CD8-positive, alpha-beta memory T cell (primary cell): ENCODE measurements at regions of chr19 and their contacts with region 1.

Region 1: DNA sequence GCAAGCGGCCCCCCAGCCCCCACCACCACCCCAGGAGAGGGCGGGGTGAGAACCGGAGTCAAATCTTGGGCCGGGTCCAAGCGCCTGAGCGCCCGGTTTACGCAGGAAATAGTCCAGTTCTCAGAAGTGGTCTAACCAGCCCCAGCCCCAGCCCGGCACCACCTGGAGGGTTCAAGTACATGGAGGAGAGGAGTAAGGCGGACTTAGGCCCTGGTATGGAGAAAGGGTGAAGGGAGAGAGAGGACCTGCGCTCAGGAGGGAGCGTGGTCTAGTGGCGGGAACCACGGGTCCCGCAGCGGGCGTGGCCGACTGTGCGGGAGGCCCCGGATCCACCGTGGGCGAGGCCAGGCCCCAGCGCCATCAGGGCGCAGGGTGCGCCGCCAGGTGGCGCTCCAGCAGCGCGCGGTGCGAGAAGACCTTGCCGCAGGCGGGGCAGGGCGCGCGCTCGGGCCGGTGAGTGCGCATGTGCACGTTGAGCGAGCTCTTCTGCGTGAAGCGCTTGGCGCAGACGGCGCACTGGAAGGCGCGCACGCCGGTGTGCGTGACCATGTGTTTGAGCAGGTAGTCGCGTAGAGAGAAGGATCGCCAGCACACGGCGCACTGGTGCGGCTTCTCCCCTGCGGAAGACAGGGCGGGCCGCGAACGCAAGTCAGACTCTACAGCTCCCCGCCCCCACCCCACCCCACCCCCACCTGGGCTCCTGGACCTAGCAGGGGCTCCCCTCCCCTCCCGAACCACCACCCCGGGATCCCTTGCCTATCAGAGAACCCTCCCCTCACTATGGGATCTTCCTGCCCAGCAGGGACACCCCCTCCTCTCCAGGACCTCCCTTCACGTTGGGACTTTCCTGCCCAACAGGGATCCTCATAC is 2.1 kb upstream of the SLC27A5 start:
- DNase-seq: peak; percentile 91 to 95 (median 94)
- H3K4me3 ChIP-seq: peak overlapping the region; percentile 53
- H3K4me3 Mint-ChIP-seq: peak overlapping the region; percentile 76 to 92 (median 83)
- H3K27ac ChIP-seq: peak overlapping the region; percentile 33
- H3K27ac Mint-ChIP-seq: peak overlapping the region; percentile 43 to 96 (median 85)
- H3K4me1 ChIP-seq: peaks cover 22% of the 10 kb centered on the region
- H3K4me1 Mint-ChIP-seq: peaks cover 25 to 43% (median 27%) of the 10 kb centered on the region in 3 donors
- H3K27me3 ChIP-seq: no peaks in the 10 kb centered on the region
- H3K27me3 Mint-ChIP-seq: peaks cover 0 to 1% of the 10 kb centered on the region in 2 donors

Region 2: DNA sequence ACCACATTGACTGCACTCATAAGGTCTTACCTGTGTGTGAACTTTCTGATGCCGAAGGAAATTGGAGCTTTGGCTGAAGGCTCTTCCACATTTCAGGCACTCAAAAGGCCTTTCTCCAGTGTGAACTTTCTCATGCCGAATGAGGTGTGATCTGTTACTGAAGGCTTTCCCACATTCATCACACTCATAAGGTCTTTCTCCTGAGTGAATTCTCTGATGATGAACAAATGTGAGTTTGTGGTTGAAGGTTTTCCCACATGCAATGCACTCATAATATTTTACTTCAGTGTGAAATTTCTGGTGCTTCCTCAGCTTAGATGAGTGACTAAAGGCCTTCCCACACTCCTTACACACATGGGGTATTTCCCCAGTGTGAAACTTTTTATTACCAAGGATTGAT is 79.7 kb before region 1 on chr19:
- CTCF ChIA-PET with region 1: no interaction called
- POLR2A ChIA-PET with region 1: no interaction called
- DNase-seq: no peak
- H3K4me3 ChIP-seq: no peak overlapping the region
- H3K4me3 Mint-ChIP-seq: no peak overlapping the region
- H3K27ac ChIP-seq: no peak overlapping the region
- H3K27ac Mint-ChIP-seq: no peak overlapping the region
- H3K4me1 ChIP-seq: peaks cover 4% of the 10 kb centered on the region
- H3K4me1 Mint-ChIP-seq: peaks cover 8 to 16% (median 12%) of the 10 kb centered on the region in 3 donors
- H3K27me3 ChIP-seq: no peaks in the 10 kb centered on the region
- H3K27me3 Mint-ChIP-seq: no peaks in the 10 kb centered on the region

Region 3: DNA sequence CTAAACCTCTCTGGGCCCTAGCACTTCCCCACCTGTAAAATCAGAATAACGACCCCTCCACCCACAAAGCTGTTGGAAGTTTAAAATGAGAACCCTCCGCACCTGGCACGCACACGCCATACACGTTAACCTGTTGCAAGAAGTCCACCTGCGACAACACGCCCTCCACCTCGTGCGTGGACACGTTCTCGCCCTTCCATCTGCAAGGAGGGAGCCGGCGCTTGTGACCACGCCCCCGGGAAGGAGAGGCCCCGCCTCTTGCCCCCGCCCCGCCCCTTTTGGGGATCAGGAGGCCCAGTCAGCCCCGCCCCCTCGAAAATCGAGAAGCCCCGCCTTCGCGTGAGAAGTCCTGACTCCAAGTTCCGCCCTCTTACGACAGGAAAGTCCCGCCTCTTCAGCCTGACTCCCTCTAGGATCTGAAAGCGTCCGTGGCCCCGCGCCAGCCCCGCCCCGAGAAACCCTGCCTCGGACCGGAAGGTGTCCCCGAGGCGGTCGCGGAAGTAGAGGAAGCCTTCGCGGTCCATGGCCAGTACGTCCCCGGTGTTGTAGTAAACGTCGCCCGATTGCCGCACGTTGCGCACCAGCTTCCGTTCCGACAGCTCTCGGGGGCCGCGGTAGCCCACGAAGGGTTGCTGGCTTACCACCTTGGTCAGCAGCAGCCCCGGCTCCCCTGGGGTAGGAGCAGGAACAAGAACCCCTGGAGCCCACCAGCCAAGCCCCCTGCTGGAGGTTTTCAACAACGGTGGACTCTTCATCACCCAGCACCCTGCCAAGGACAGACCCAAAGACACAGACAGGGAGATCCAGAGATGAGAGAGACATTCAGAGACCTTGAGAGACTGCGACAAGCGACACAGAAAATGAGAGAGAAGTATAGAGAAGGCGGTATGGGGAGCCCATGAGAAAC is 14.7 kb before region 1 on chr19:
- CTCF ChIA-PET with region 1: interaction called, 18 read pairs
- POLR2A ChIA-PET with region 1: no interaction called
- DNase-seq: peak; percentile 87 to 96 (median 91)
- H3K4me3 ChIP-seq: peak overlapping the region; percentile 83
- H3K4me3 Mint-ChIP-seq: peak overlapping the region; percentile 86 to 96 (median 90)
- H3K27ac ChIP-seq: peak overlapping the region; percentile 60
- H3K27ac Mint-ChIP-seq: peak overlapping the region; percentile 91 to 98 (median 97)
- H3K4me1 ChIP-seq: peaks cover 18% of the 10 kb centered on the region
- H3K4me1 Mint-ChIP-seq: peaks cover 25 to 32% (median 26%) of the 10 kb centered on the region in 3 donors
- H3K27me3 ChIP-seq: no peaks in the 10 kb centered on the region
- H3K27me3 Mint-ChIP-seq: peaks cover 0 to 4% of the 10 kb centered on the region in 2 donors

Region 4: GRCh38 chr19:58543826-58544590 is 30.1 kb after region 1 on chr19 and contains the start of gene TRIM28:
- CTCF ChIA-PET with region 1: interaction called, 29 read pairs
- POLR2A ChIA-PET with region 1: no interaction called
- DNase-seq: peak; percentile 100
- H3K4me3 ChIP-seq: peak within 1 kb of the TSS; percentile 71
- H3K4me3 Mint-ChIP-seq: peak within 1 kb of the TSS; percentile 89 to 96 (median 94)
- H3K27ac ChIP-seq: peak within 1 kb of the TSS; percentile 84
- H3K27ac Mint-ChIP-seq: peak within 1 kb of the TSS; percentile 98 to 100 (median 99)
- H3K4me1 ChIP-seq: peaks cover 24% of the 10 kb centered on the region
- H3K4me1 Mint-ChIP-seq: peaks cover 31 to 42% (median 36%) of the 10 kb centered on the region in 3 donors
- H3K27me3 ChIP-seq: no peaks in the 10 kb centered on the region
- H3K27me3 Mint-ChIP-seq: peaks cover 14 to 17% of the 10 kb centered on the region in 2 donors
- total RNA-seq, gene TRIM28: 705 to 715 TPM

Region 5: DNA sequence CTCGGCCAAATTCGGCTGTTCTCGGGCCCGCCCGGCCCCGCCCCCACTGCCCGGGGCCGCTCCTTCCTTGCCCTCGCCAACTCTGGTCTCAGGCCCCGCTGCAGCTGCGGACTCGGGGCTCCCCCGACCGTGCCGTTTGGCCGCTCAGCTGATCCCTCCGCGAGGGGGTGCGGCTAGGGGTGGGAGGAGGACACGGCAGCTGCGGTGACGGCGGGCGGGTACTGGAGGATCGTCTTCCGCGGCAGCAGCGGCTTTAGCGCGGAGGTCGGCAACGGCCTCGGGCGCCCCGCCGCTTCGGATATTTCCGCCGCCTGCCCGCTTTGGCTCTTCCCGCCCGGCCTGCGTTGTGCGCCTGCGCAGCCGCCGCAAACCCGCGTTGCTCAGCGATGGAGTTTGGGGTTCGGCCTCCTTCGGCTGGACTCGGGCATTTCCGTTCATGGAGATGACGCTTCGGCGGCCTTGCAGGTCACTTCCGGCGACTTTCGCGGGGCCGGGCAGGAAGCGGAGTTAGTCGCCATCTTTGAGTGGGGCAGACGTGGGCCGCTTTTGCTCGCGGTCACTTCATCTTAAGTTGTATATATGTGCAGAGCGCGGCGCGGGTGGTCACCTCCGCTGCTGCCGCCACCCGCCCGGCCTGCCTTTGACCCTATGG is 44.8 kb after region 1 on chr19:
- CTCF ChIA-PET with region 1: interaction called, 45 read pairs
- POLR2A ChIA-PET with region 1: interaction called, 16 read pairs
- DNase-seq: peak; percentile 100
- H3K4me3 ChIP-seq: peak overlapping the region; percentile 100
- H3K4me3 Mint-ChIP-seq: peak overlapping the region; percentile 93 to 100 (median 97)
- H3K27ac ChIP-seq: peak overlapping the region; percentile 99
- H3K27ac Mint-ChIP-seq: peak overlapping the region; percentile 96 to 100 (median 98)
- H3K4me1 ChIP-seq: peaks cover 62% of the 10 kb centered on the region
- H3K4me1 Mint-ChIP-seq: peaks cover 65 to 87% (median 68%) of the 10 kb centered on the region in 3 donors
- H3K27me3 ChIP-seq: no peaks in the 10 kb centered on the region
- H3K27me3 Mint-ChIP-seq: no peaks in the 10 kb centered on the region

Region 6: GRCh38 chr19:58572818-58573657 is 59.1 kb after region 1 on chr19 and contains the start of gene MZF1:
- CTCF ChIA-PET with region 1: interaction called, 28 read pairs
- POLR2A ChIA-PET with region 1: interaction called, 6 read pairs
- DNase-seq: peak; percentile 99 to 100 (median 100)
- H3K4me3 ChIP-seq: peak within 1 kb of the TSS; percentile 98
- H3K4me3 Mint-ChIP-seq: peak within 1 kb of the TSS; percentile 89 to 99 (median 95)
- H3K27ac ChIP-seq: peak within 1 kb of the TSS; percentile 100
- H3K27ac Mint-ChIP-seq: peak within 1 kb of the TSS; percentile 95 to 100 (median 100)
- H3K4me1 ChIP-seq: peaks cover 29% of the 10 kb centered on the region
- H3K4me1 Mint-ChIP-seq: peaks cover 24 to 49% (median 26%) of the 10 kb centered on the region in 3 donors
- H3K27me3 ChIP-seq: no peaks in the 10 kb centered on the region
- H3K27me3 Mint-ChIP-seq: peaks cover 0 to 9% of the 10 kb centered on the region in 2 donors
- total RNA-seq, gene MZF1: 14.0 to 14.8 TPM

Region 7: DNA sequence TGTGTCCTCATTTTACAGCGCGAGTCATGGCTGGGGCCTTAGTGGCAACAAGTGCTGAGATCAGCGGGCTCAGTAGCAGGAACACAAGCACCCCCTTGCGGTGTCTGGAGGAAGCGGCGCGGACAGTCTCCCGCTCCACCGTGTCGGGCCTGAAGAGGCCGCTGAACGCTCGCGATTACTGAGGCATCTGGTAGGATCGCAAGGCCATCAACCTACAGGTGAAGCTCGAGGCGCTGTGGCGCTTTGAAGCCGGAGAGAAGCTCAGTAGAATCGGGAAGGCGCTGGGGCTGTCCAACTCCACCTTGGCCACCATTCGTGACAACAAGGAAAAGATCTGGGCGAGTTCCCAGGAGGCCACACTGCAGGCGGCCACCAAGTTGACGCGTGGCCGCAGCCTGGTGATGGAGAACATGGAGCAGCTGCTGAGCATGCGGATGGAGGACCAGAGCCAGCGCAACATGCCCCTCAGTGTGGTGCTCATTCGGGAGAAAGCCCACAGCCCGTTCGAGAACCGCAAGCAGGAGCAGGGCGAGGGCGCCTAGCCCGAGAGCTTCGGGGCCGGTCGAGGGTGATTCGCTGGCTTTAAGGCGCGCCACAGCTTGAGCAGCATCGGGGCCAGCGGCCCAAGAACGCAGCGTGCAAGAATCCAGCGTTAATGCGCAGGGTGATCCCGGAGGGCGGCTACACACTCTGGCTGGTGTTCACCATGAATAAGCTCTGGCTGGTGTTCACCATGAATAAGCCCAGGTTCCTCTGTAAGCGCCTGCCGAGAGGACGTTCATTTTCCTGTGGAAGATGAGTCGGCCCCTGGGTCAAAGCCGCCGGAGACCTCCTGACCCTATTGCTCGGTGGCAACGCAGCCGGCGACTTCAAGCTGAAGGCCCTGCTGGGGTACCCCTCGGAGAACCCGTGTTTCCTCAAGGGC is 67.6 kb after region 1 on chr19:
- CTCF ChIA-PET with region 1: interaction called, 77 read pairs
- POLR2A ChIA-PET with region 1: interaction called, 6 read pairs
- DNase-seq: peak; percentile 82 to 91 (median 84)
- H3K4me3 ChIP-seq: no peak overlapping the region
- H3K4me3 Mint-ChIP-seq: peak overlapping the region in 1 of 7 donors; percentile 57
- H3K27ac ChIP-seq: peak overlapping the region; percentile 65
- H3K27ac Mint-ChIP-seq: peak overlapping the region; percentile 65 to 88 (median 84)
- H3K4me1 ChIP-seq: peaks cover 9% of the 10 kb centered on the region
- H3K4me1 Mint-ChIP-seq: peaks cover 15 to 28% (median 20%) of the 10 kb centered on the region in 3 donors
- H3K27me3 ChIP-seq: no peaks in the 10 kb centered on the region
- H3K27me3 Mint-ChIP-seq: peaks cover 0 to 2% of the 10 kb centered on the region in 2 donors